Right lobe of liver (tissue), 6 donors: ENCODE measurements at regions of chr3 and their contacts with region 1.

Region 1: DNA sequence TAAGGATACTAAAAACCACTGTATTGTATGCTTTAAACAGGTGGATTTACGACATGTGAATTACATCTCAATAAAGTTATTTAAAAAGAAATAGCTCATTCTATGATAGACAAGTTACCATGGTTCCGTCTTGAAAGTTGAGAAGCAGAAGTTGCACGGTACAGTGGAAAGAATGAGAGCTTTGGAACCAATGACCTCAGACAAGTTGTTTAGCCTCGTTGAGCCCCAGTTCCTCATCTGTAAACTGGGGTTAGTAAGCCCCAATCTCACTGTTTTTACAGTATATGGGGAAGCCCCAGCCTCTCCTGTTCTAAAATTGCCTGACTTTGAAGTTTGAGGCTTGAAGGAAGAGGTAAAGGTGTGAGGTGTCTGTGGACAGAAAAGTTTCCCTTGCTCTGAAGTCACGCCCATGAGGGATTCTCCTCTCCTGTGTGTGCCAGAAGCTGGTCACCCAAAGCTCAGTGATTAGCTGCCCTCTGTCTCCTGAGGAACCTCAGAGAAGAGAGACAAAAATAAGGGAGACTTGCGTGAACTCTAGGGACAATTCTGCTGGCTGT is 10.0 kb downstream of the CRYGS start:
- DNase-seq: no peak
- ATAC-seq: peak; percentile 33 to 72 (median 54)
- H3K4me3 ChIP-seq: no peak overlapping the region
- H3K27ac ChIP-seq: no peak overlapping the region
- H3K4me1 ChIP-seq: peaks cover 0 to 5% (median 2%) of the 10 kb centered on the region in 4 donors
- H3K27me3 ChIP-seq: no peaks in the 10 kb centered on the region
- CTCF ChIP-seq: no peak
- POLR2A ChIP-seq: no peak

Region 2: DNA sequence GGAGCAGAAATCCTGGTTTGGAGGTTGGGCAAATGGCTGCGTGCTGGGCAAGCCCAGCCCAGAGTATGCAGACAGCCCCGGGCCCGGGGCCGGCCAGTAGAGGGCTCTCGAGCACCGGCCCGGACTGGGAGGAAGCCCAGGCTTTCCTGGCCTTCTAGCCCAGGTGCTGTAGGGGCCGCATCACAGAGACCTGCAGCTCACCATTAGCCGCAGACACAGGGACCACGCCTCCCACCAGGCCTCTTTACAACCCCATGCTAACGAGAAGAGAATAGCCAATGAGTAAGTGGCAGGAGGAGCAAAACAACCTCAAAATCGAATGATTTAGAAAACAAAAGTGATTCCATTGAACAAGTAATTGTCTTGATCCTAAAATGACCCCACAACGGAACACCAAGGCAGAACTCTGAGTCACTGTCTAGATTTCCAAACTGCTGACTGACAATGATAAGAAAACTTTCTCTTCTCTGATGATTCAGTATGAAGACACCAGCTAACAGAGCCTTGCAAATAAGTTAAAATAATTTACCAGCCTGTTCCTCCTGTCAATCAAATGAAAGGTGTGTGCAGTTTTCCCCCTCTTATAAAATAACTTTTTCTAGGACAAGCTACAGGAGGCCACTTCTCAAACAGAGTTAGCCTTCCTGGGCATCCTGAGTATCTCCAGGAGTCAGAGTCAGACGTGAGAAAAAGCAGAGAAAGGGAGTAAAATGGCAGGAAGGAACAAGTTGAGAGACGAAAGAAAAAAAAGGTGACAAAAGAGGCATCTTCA is 274.4 kb before region 1 on chr3:
- intact Hi-C with region 1: loop called (anchors 5 to 10 kb)
- DNase-seq: peak; percentile 78 to 83 (median 79)
- ATAC-seq: peak; percentile 97 to 99 (median 98)
- H3K4me3 ChIP-seq: no peak overlapping the region
- H3K27ac ChIP-seq: no peak overlapping the region
- H3K4me1 ChIP-seq: no peaks in the 10 kb centered on the region
- H3K27me3 ChIP-seq: no peaks in the 10 kb centered on the region
- CTCF ChIP-seq: peak; percentile 78 to 92 (median 89)
- POLR2A ChIP-seq: no peak

Region 3: GRCh38 chr3:186381424-186382216 is 152.6 kb before region 1 on chr3:
- intact Hi-C with region 1: no loop called
- DNase-seq: no peak
- ATAC-seq: peak; percentile 84 to 90 (median 84)
- H3K4me3 ChIP-seq: no peak overlapping the region
- H3K27ac ChIP-seq: peak overlapping the region in 1 of 3 donors; percentile 56
- H3K4me1 ChIP-seq: peaks cover 0 to 10% (median 0%) of the 10 kb centered on the region in 4 donors
- H3K27me3 ChIP-seq: no peaks in the 10 kb centered on the region
- CTCF ChIP-seq: no peak
- POLR2A ChIP-seq: no peak

Region 4: DNA sequence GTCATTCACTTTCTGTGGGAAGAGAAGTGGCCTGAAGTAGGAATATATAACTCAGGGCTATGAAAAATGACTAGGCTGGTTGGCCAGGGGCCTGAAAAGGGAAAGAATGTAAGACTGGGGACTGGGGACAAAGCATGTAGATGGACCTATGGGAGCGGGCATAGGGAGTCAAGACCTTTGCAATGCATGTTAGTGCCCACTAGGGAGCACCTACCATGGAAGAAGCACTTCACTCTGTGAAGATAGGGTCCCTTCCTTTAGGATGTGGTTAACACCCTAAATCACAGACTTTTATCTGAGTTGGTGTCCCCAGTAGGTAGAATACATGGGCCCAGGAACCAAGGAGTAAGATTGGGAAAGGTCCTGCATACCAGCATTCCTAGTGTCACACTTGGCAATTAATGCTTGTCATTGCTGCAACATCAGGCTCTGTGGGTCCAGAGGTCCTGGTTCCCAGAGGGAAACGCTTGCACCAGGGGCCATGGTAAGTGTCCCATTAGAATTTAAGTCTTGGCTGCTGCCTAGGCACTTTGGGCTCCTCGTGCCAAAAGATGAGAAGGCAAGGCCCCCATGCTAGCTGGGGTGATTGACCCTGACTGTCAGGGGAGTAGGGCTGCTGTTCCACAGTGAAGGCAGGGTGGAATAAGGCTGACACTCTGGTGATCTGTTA is 69.6 kb before region 1 on chr3:
- intact Hi-C with region 1: no loop called
- DNase-seq: no peak
- ATAC-seq: peak in 1 of 4 donors; percentile 24
- H3K4me3 ChIP-seq: no peak overlapping the region
- H3K27ac ChIP-seq: no peak overlapping the region
- H3K4me1 ChIP-seq: no peaks in the 10 kb centered on the region
- H3K27me3 ChIP-seq: no peaks in the 10 kb centered on the region
- CTCF ChIP-seq: no peak
- POLR2A ChIP-seq: no peak